Esophagus muscularis mucosa (tissue), 4 donors: ENCODE measurements at regions of chr12 and their contacts with region 1.

Region 1: GRCh38 chr12:46382964-46383653 is 10.5 kb upstream of the SLC38A2 start:
- DNase-seq: peak; percentile 99
- H3K4me3 ChIP-seq: peak overlapping the region; percentile 76 to 80 (median 76)
- H3K27ac ChIP-seq: peak overlapping the region; percentile 99
- H3K4me1 ChIP-seq: peaks cover 45 to 52% (median 48%) of the 10 kb centered on the region in 4 donors
- H3K27me3 ChIP-seq: no peaks in the 10 kb centered on the region
- CTCF ChIP-seq: peak; percentile 15 to 51 (median 25)
- EP300 ChIP-seq: no peak
- POLR2A ChIP-seq: peak; percentile 88

Region 2: DNA sequence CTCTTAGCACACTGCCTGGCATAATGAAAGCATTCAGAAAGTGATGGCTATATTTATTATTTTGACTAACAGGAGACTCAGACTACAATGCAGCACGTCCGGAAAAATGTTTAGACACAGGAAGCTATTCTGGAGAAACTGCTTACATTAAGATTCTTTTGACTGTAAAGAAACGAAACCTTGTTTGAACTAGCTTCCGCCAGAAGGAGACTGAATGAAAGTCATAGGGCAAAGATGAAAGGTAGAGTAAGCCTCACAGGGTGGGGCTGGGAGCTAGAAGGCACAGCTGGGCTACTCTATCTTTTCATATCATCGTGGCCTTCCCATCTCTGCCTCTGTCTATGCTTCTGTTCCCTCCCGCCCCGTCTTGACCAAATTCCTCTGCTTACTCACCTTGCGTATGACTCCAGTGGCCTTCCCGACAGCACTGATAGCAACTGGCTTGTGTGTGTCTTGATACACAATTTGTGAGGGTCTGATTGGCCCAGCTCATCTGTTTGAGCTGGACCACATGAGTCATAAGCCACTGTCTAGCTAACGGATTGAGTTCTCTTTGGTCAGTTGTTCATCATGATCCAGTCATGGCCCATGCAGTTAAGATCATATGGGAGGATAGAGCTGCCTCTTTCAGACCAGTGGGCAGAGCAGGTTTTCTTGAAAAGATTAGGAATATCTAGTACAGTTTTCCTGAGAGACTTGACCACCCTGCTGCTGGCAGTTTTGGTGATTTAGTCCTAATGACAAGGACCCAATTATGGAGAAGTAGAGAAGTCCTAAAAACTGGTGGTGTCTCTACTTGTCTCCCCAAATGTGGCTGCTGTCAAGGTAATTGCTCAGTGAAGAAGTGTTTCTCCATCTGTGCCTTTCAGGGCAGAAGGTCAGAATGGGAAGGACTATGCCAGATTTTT is 141.0 kb after region 1 on chr12:
- intact Hi-C with region 1: loop called (anchors 10 kb)
- DNase-seq: no peak
- H3K4me3 ChIP-seq: no peak overlapping the region
- H3K27ac ChIP-seq: peak overlapping the region; percentile 64 to 71 (median 67)
- H3K4me1 ChIP-seq: peaks cover 38 to 49% (median 46%) of the 10 kb centered on the region in 4 donors
- H3K27me3 ChIP-seq: no peaks in the 10 kb centered on the region
- CTCF ChIP-seq: no peak
- EP300 ChIP-seq: no peak
- POLR2A ChIP-seq: no peak

Region 3: GRCh38 chr12:46556105-46556559 is 173.0 kb after region 1 on chr12:
- intact Hi-C with region 1: loop called (anchors 10 kb)
- DNase-seq: no peak
- H3K4me3 ChIP-seq: peak overlapping the region in 1 of 4 donors; percentile 1
- H3K27ac ChIP-seq: peak overlapping the region; percentile 45 to 69 (median 63)
- H3K4me1 ChIP-seq: peaks cover 12 to 39% (median 23%) of the 10 kb centered on the region in 4 donors
- H3K27me3 ChIP-seq: no peaks in the 10 kb centered on the region
- CTCF ChIP-seq: no peak
- EP300 ChIP-seq: no peak
- POLR2A ChIP-seq: no peak

Region 4: GRCh38 chr12:46617167-46617566 is 234.1 kb after region 1 on chr12:
- intact Hi-C with region 1: loop called (anchors 5 kb)
- DNase-seq: no peak
- H3K4me3 ChIP-seq: no peak overlapping the region
- H3K27ac ChIP-seq: peak overlapping the region; percentile 46 to 74 (median 60)
- H3K4me1 ChIP-seq: peaks cover 0 to 17% (median 13%) of the 10 kb centered on the region in 4 donors
- H3K27me3 ChIP-seq: no peaks in the 10 kb centered on the region
- CTCF ChIP-seq: no peak
- EP300 ChIP-seq: peak; percentile 72
- POLR2A ChIP-seq: no peak